ENCODE measurements at regions of chr18 and their contacts with region 1.

Region 1: GRCh38 chr18:11947214-11948191 is 33.8 kb upstream of the IMPA2 start:
- DNase-seq: peak; percentile 98
- H3K4me3 ChIP-seq: peak overlapping the region; percentile 42 to 60 (median 50)
- H3K27ac ChIP-seq: peak overlapping the region; percentile 88 to 99 (median 95)
- H3K4me1 ChIP-seq: peaks cover 0 to 34% (median 27%) of the 10 kb centered on the region in 4 donors
- H3K27me3 ChIP-seq: no peaks in the 10 kb centered on the region
- CTCF ChIP-seq: no peak
- EP300 ChIP-seq: peak in 2 of 4 donors; percentile 65 to 77
- POLR2A ChIP-seq: peak; percentile 19 to 45

Region 2: DNA sequence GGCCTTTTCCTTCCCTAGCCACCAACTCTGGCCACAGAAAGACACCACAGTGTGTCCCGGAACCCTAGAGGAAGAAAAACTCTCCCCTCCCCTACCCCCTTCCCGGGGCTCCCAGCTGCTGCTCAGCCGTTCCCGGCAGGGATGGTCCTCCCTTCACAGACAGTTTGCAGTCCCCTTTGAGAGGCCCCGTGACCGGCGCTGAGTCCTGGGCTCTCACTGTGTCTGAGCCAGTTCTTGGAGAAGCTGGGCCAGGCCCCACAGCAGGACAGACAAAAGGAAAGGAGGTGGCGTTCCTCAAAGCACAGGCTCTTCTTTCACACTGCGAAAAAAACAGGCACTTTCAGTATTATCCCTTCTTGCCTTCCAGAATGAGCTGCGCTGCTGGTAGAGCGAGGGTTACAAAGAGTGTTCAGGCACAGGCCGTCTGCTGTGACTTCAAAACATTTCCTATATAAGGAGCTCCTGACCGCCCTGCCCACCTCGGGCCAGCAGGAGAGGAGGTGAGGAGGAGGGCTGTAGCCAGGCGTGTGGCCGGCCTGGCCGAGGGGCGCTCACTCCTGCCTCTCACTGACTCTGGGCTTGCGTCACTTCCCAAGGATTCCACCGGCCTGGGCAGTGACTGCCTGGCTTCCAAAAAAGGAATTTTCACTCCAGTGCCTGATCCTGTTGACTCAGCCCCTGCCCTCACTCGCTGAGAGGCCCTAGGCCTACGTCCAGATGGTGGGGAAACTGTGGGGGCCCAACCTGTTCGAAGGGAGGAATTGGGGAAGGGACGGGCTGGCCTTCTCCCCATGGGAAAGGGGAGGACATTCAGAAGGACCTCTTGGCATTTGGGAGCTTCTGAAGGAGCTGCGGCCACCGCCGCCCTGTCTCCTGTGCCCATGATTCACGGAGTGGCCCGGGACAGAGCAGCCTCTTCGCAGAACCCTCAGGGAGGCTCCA is 331.5 kb after region 1 on chr18:
- intact Hi-C with region 1: loop called (anchors 5 kb)
- DNase-seq: peak; percentile 98
- H3K4me3 ChIP-seq: peak overlapping the region; percentile 42 to 56 (median 50)
- H3K27ac ChIP-seq: peak overlapping the region; percentile 92 to 99 (median 96)
- H3K4me1 ChIP-seq: peaks cover 0 to 58% (median 52%) of the 10 kb centered on the region in 4 donors
- H3K27me3 ChIP-seq: no peaks in the 10 kb centered on the region
- CTCF ChIP-seq: peak in 3 of 4 experiments; percentile 7 to 20 (median 17)
- EP300 ChIP-seq: peak in 3 of 4 donors; percentile 49 to 93 (median 67)
- POLR2A ChIP-seq: peak; percentile 80 to 87

Measured in sigmoid colon (tissue), 7 donors.